ENCODE measurements at regions of chr12 and their contacts with region 1.

Region 1: GRCh38 chr12:82685790-82686167 is 927 bp upstream of the TMTC2 start:
- DNase-seq: peak; percentile 72 to 93
- H3K4me3 ChIP-seq: peak overlapping the region; percentile 73 to 94 (median 86)
- H3K27ac ChIP-seq: no peak overlapping the region
- H3K4me1 ChIP-seq: peaks cover 0 to 7% (median 5%) of the 10 kb centered on the region in 4 experiments; a peak in 3 of 7 replicates
- H3K27me3 ChIP-seq: 0 out of 7 replicates have a peak, but pooled peaks cover 0 to 2% (median 0%) of the 10 kb centered on the region in 4 experiments
- CTCF ChIP-seq: peak; percentile 86 to 97 (median 93)
- EP300 ChIP-seq: no peak
- POLR2A ChIP-seq: no peak
- RAD21 ChIP-seq: peak; percentile 97 to 99

Region 2: GRCh38 chr12:82672811-82673495 is 12.8 kb before region 1 on chr12:
- CTCF ChIA-PET with region 1: interaction called, 30 read pairs
- POLR2A ChIA-PET with region 1: no interaction called
- DNase-seq: no peak
- H3K4me3 ChIP-seq: no peak overlapping the region
- H3K27ac ChIP-seq: no peak overlapping the region
- H3K4me1 ChIP-seq: no peaks in the 10 kb centered on the region
- H3K27me3 ChIP-seq: no peaks in the 10 kb centered on the region
- CTCF ChIP-seq: no peak
- EP300 ChIP-seq: no peak
- POLR2A ChIP-seq: no peak
- RAD21 ChIP-seq: no peak

Region 3: GRCh38 chr12:82698708-82699564 is 13.2 kb after region 1 on chr12:
- CTCF ChIA-PET with region 1: interaction called, 20 read pairs
- POLR2A ChIA-PET with region 1: no interaction called
- DNase-seq: no peak
- H3K4me3 ChIP-seq: no peak overlapping the region
- H3K27ac ChIP-seq: no peak overlapping the region
- H3K4me1 ChIP-seq: no peaks in the 10 kb centered on the region; a peak in 1 of 7 replicates
- H3K27me3 ChIP-seq: no peaks in the 10 kb centered on the region
- CTCF ChIP-seq: no peak
- EP300 ChIP-seq: no peak
- POLR2A ChIP-seq: no peak
- RAD21 ChIP-seq: no peak

Region 4: GRCh38 chr12:82758749-82759330 is 73.1 kb after region 1 on chr12:
- CTCF ChIA-PET with region 1: interaction called, 17 read pairs
- POLR2A ChIA-PET with region 1: interaction called, 3 read pairs
- DNase-seq: no peak
- H3K4me3 ChIP-seq: no peak overlapping the region
- H3K27ac ChIP-seq: no peak overlapping the region
- H3K4me1 ChIP-seq: peaks cover 0 to 11% (median 7%) of the 10 kb centered on the region in 4 experiments; a peak in 3 of 7 replicates
- H3K27me3 ChIP-seq: no peaks in the 10 kb centered on the region
- CTCF ChIP-seq: no peak
- EP300 ChIP-seq: no peak
- POLR2A ChIP-seq: no peak
- RAD21 ChIP-seq: no peak

Region 5: GRCh38 chr12:82862069-82862841 is 176.5 kb after region 1 on chr12:
- CTCF ChIA-PET with region 1: interaction called, 10 read pairs
- POLR2A ChIA-PET with region 1: no interaction called
- DNase-seq: no peak
- H3K4me3 ChIP-seq: no peak overlapping the region
- H3K27ac ChIP-seq: no peak overlapping the region
- H3K4me1 ChIP-seq: peaks cover 3 to 6% (median 5%) of the 10 kb centered on the region in 4 experiments; a peak in 5 of 7 replicates
- H3K27me3 ChIP-seq: no peaks in the 10 kb centered on the region; a peak in 1 of 7 replicates
- CTCF ChIP-seq: no peak
- EP300 ChIP-seq: no peak
- POLR2A ChIP-seq: no peak
- RAD21 ChIP-seq: no peak

Region 6: GRCh38 chr12:83389237-83389996 is 703.6 kb after region 1 on chr12:
- CTCF ChIA-PET with region 1: interaction called, 22 read pairs
- POLR2A ChIA-PET with region 1: no interaction called
- DNase-seq: peak; percentile 38 to 62
- H3K4me3 ChIP-seq: no peak overlapping the region
- H3K27ac ChIP-seq: no peak overlapping the region
- H3K4me1 ChIP-seq: no peaks in the 10 kb centered on the region
- H3K27me3 ChIP-seq: no peaks in the 10 kb centered on the region
- CTCF ChIP-seq: peak; percentile 75 to 84 (median 75)
- EP300 ChIP-seq: no peak
- POLR2A ChIP-seq: no peak
- RAD21 ChIP-seq: peak; percentile 90 to 91